ENCODE measurements at regions of chr3 and their contacts with region 1.

Region 1: GRCh38 chr3:76083992-76084391 is 298.6 kb upstream of the ZNF717 start:
- DNase-seq: no peak
- ATAC-seq: no peak
- H3K4me3 ChIP-seq: no peak overlapping the region
- H3K27ac ChIP-seq: no peak overlapping the region
- H3K4me1 ChIP-seq: no peaks in the 10 kb centered on the region
- H3K27me3 ChIP-seq: no peaks in the 10 kb centered on the region
- CTCF ChIP-seq: no peak
- EP300 ChIP-seq: no peak
- POLR2A ChIP-seq: no peak
- RAD21 ChIP-seq: no peak

Region 2: GRCh38 chr3:76051145-76051544 is 32.8 kb before region 1 on chr3:
- CTCF ChIA-PET with region 1: no interaction called
- POLR2A ChIA-PET with region 1: no interaction called
- in situ Hi-C with region 1: no loop called
- intact Hi-C with region 1: loop called (anchors 1 kb)
- DNase-seq: no peak
- ATAC-seq: no peak
- H3K4me3 ChIP-seq: no peak overlapping the region
- H3K27ac ChIP-seq: no peak overlapping the region
- H3K4me1 ChIP-seq: no peaks in the 10 kb centered on the region
- H3K27me3 ChIP-seq: no peaks in the 10 kb centered on the region
- CTCF ChIP-seq: no peak
- EP300 ChIP-seq: no peak
- POLR2A ChIP-seq: no peak
- RAD21 ChIP-seq: no peak

Measured in HepG2 (cell line).